ENCODE measurements at regions of chr10 and their contacts with region 1.

Region 1: DNA sequence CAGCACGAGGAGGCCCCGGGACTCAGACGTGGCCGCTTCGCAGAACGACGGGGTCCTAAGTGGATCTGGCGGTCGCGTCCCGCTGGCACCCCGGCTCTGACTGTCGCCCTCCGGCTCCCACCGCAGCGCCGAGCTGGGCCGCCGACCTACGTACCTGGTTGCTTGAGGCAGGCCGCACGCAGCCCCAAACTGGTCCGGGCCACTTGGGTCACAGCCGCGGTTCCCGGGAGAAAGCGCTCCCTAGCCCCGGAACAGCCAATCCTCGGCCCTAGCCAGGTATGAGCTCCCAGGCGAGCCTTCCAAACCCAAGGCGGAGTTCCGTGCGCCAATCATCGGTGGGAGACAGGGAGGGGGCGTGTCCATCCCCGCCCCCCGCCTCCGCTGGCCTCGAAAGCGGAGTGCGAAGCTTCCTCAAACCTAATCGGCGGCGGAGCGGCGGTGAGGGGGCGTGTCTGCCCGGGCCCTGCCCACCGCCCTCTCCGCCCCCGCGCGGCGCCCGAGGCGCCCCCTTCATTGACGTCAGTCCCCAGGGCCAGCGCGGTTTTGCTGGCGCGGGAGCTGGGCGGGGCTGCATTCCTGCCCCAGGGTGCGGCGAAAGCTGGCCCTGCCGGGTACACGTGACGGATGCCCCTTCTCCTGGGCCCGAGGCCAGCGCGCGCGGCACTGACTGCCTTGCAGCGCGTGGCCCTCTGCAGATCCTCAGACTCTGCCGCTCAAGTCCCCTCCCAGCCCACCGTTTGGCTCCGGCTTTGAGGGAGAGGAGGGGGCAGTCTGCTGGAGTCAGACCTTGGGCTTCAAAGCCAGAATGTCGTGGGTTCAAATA is at the start of gene AVPI1:
- H3K4me3 Mint-ChIP-seq: peak within 1 kb of the TSS; percentile 90
- H3K27ac Mint-ChIP-seq: peak within 1 kb of the TSS; percentile 93
- H3K4me1 Mint-ChIP-seq: peaks cover 66% of the 10 kb centered on the region
- H3K27me3 Mint-ChIP-seq: no peaks in the 10 kb centered on the region

Region 2: GRCh38 chr10:97307866-97308780 is 379.1 kb before region 1 on chr10:
- intact Hi-C with region 1: no loop called
- H3K4me3 Mint-ChIP-seq: no peak overlapping the region
- H3K27ac Mint-ChIP-seq: no peak overlapping the region
- H3K4me1 Mint-ChIP-seq: peaks cover 20% of the 10 kb centered on the region
- H3K27me3 Mint-ChIP-seq: no peaks in the 10 kb centered on the region

Region 3: GRCh38 chr10:97640174-97640867 is 46.9 kb before region 1 on chr10 and contains the start of gene PI4K2A:
- intact Hi-C with region 1: loop called (anchors 2 kb)
- H3K4me3 Mint-ChIP-seq: peak within 1 kb of the TSS; percentile 95
- H3K27ac Mint-ChIP-seq: peak within 1 kb of the TSS; percentile 97
- H3K4me1 Mint-ChIP-seq: peaks cover 36% of the 10 kb centered on the region
- H3K27me3 Mint-ChIP-seq: peaks cover 1% of the 10 kb centered on the region

Region 4: DNA sequence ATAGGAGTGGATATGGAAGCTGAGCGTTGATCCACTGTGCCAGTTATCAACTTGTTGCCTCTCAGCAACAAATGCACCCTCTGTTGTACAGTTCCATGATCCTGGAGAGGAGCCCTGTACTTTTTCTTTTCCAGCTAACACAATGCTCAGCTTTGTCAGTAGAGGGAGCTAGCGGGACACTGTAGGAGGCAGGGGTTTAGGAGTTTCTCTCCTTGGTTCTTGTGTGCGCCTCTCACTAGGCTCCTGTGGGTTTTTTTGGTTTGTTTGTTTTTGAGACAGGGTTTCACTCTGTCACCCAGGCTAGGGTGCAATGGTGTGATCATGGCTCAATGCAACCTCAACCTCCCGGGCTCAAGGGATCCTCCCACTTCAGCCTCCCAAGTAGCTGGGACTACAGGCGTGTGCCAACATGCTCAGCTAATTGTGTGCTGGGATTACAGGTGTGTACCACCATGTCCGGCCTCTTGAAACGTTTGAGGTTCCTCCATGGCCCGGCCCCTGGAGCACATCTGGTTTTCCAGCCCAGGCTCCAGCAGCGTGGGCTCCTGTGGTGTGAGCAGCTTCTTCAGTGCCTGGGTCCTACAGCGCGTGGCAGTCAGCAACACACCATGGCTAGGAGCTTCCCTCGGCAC is 14.4 kb after region 1 on chr10:
- intact Hi-C with region 1: loop called (anchors 2 kb)
- H3K4me3 Mint-ChIP-seq: no peak overlapping the region
- H3K27ac Mint-ChIP-seq: no peak overlapping the region
- H3K4me1 Mint-ChIP-seq: peaks cover 12% of the 10 kb centered on the region
- H3K27me3 Mint-ChIP-seq: peaks cover 5% of the 10 kb centered on the region

Measured in dendritic cell treated with granulocyte-macrophage colony-stimulating factor and Interleukin-4, amounts not matched to agents 40 ng/mL and 50 ng/mL, for 4 days (primary cell).